ENCODE measurements at regions of chr9 and their contacts with region 1.

Region 1: DNA sequence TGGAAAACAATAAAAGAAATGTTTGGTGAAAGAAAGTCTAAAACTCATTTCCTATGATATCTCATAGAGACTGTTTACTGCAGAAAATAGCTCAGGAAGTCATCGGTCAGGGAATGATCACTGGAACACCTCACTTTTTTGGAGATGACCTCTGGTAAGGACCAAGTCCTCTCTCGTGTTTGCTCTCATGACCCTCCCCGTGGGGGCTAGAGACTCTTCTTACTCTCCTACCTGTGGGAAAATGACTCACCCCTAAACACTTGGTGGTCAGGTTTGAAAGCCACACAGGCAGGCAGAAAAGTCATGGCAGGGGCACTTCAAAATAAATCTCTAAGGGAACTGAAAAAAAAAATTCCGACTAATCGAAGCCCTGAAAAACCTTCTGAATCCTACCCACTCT is 48.2 kb downstream of the FAM240B start:
- DNase-seq: peak; percentile 52
- CTCF ChIP-seq: no peak

Region 2: DNA sequence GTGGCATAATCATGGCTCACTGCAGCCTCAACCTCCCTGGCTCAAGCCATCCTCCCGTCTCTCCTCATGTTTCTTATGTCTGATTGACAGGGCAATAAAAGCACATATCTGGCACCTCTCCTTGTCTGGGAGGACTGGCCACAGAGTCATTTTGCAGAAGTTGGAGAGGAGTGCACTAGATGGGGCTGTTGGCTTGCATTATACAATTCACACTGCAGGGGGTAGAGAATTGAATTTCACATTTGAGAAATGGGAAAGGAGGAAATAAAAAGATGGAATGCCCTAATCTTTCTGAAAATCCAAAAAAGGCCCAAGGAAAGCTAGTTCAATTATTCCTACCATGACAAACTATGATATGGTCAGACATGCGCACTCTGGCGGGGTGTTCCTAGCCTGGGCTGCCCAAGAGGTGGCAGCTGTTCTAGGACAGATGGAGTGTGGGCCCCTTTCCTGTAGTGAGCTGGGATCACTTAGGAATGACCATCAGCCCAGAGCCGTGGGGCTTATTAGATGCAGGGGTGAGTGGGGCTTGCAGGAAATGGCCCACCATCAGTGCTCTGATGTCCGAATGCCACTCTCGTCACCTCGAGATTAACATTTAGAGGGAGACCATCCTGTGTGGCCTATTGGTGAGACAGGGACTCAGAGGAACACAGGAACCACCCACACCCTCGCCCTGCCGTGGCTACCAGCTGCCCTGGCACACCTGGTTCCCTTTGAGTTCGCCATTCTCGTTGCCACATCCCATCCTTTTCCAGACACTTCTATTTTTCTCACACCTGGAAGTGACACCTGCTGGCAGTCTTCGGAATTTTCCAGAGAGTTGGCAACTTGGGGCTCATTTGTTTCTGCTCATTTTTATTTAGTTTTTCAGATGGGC is 29.5 kb before region 1 on chr9:
- CTCF ChIA-PET with region 1: interaction called, 38 read pairs
- POLR2A ChIA-PET with region 1: no interaction called
- DNase-seq: peak; percentile 42
- CTCF ChIP-seq: peak; percentile 59

Region 3: GRCh38 chr9:38682718-38683117 is 11.0 kb after region 1 on chr9:
- CTCF ChIA-PET with region 1: interaction called, 11 read pairs
- POLR2A ChIA-PET with region 1: no interaction called
- DNase-seq: no peak
- CTCF ChIP-seq: no peak

Region 4: GRCh38 chr9:38689678-38690077 is 17.9 kb after region 1 on chr9:
- CTCF ChIA-PET with region 1: interaction called, 10 read pairs
- POLR2A ChIA-PET with region 1: no interaction called
- DNase-seq: no peak
- CTCF ChIP-seq: no peak

Region 5: GRCh38 chr9:38697776-38698300 is 26.1 kb after region 1 on chr9:
- CTCF ChIA-PET with region 1: interaction called, 12 read pairs
- POLR2A ChIA-PET with region 1: no interaction called
- DNase-seq: no peak
- CTCF ChIP-seq: no peak

Region 6: GRCh38 chr9:38707885-38708637 is 36.3 kb after region 1 on chr9:
- CTCF ChIA-PET with region 1: interaction called, 14 read pairs
- POLR2A ChIA-PET with region 1: no interaction called
- DNase-seq: peak; percentile 32
- CTCF ChIP-seq: peak; percentile 28

Region 7: DNA sequence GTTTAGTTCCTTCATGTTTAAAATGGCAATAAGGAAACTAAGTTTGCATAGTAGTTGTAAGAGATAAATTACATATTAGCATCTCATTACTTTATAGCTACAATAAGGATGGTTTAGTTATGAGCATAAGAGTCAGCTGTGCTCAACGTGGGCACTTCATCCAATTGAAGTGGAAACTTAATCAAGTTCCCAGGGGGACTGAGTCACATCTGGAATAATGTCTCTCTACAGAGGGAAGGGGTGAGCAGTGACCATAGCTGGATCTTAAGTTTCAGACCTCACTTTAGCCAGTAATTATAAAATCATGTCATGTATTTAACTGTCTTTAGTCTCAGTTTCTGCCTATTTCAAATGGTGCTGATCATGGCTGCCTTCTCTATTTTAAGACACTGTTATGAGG is 85.0 kb after region 1 on chr9:
- CTCF ChIA-PET with region 1: no interaction called
- POLR2A ChIA-PET with region 1: no interaction called
- DNase-seq: no peak
- CTCF ChIP-seq: no peak